GM18951 (cell line): ENCODE measurements at regions of chr17 and their contacts with region 1.

Region 1: GRCh38 chr17:5237541-5238016 is 2.9 kb upstream of the SCIMP start:
- POLR2A ChIP-seq: no peak

Region 2: GRCh38 chr17:5042157-5043022 is 195.2 kb before region 1 on chr17:
- in situ Hi-C with region 1: no loop called
- POLR2A ChIP-seq: no peak

Region 3: GRCh38 chr17:5184288-5184687 is 53.3 kb before region 1 on chr17:
- in situ Hi-C with region 1: loop called (anchors 10 kb)
- POLR2A ChIP-seq: no peak

Region 4: GRCh38 chr17:5203908-5204294 is 33.7 kb before region 1 on chr17:
- in situ Hi-C with region 1: loop called (anchors 5 kb)
- POLR2A ChIP-seq: no peak